IMR-90 (cell line): ENCODE measurements at regions of chr12 and their contacts with region 1.

Region 1: GRCh38 chr12:57583008-57583831 is 7.8 kb upstream of the PIP4K2C start:
- DNase-seq: peak; percentile 81
- ATAC-seq: peak; percentile 100
- H3K4me3 ChIP-seq: no peak overlapping the region
- H3K27ac ChIP-seq: no peak overlapping the region
- H3K4me1 ChIP-seq: no peaks in the 10 kb centered on the region
- H3K27me3 ChIP-seq: peaks cover 36% of the 10 kb centered on the region
- CTCF ChIP-seq: peak; percentile 99
- POLR2A ChIP-seq: no peak
- RAD21 ChIP-seq: peak; percentile 91

Region 2: GRCh38 chr12:56751712-56752598 is 831.3 kb before region 1 on chr12 and contains the start of gene PRIM1:
- CTCF ChIA-PET with region 1: no interaction called
- POLR2A ChIA-PET with region 1: no interaction called
- dilution Hi-C with region 1: no loop called
- in situ Hi-C with region 1: no loop called
- intact Hi-C with region 1: no loop called
- DNase-seq: peak; percentile 66
- ATAC-seq: peak; percentile 95
- H3K4me3 ChIP-seq: peak within 1 kb of the TSS; percentile 82
- H3K27ac ChIP-seq: peak within 1 kb of the TSS; percentile 68
- H3K4me1 ChIP-seq: no peaks in the 10 kb centered on the region
- H3K27me3 ChIP-seq: no peaks in the 10 kb centered on the region
- CTCF ChIP-seq: no peak
- POLR2A ChIP-seq: no peak
- RAD21 ChIP-seq: no peak
- total RNA-seq, gene PRIM1: 12.0 and 15.3 TPM in 2 replicates

Region 3: GRCh38 chr12:57621497-57622292 is 38.5 kb after region 1 on chr12:
- CTCF ChIA-PET with region 1: interaction called, 5 read pairs
- POLR2A ChIA-PET with region 1: no interaction called
- dilution Hi-C with region 1: no loop called
- in situ Hi-C with region 1: loop called (anchors 5 kb)
- intact Hi-C with region 1: loop called (anchors 1 kb)
- DNase-seq: peak; percentile 11
- ATAC-seq: peak; percentile 88
- H3K4me3 ChIP-seq: peak overlapping the region; percentile 34
- H3K27ac ChIP-seq: no peak overlapping the region
- H3K4me1 ChIP-seq: no peaks in the 10 kb centered on the region
- H3K27me3 ChIP-seq: peaks cover 56% of the 10 kb centered on the region
- CTCF ChIP-seq: peak; percentile 80
- POLR2A ChIP-seq: no peak
- RAD21 ChIP-seq: peak; percentile 63

Region 4: GRCh38 chr12:57632694-57633477 is 49.7 kb after region 1 on chr12 and contains the start of gene B4GALNT1:
- CTCF ChIA-PET with region 1: interaction called, 11 read pairs
- POLR2A ChIA-PET with region 1: no interaction called
- dilution Hi-C with region 1: no loop called
- in situ Hi-C with region 1: no loop called
- intact Hi-C with region 1: loop called (anchors 1 kb)
- DNase-seq: peak; percentile 45
- ATAC-seq: peak; percentile 97
- H3K4me3 ChIP-seq: peak within 1 kb of the TSS; percentile 43
- H3K27ac ChIP-seq: no peak within 1 kb of the TSS
- H3K4me1 ChIP-seq: peaks cover 2% of the 10 kb centered on the region; the same call in 1 of the 2 replicates
- H3K27me3 ChIP-seq: peaks cover 41% of the 10 kb centered on the region
- CTCF ChIP-seq: peak; percentile 81
- POLR2A ChIP-seq: no peak
- RAD21 ChIP-seq: peak; percentile 64
- total RNA-seq, gene B4GALNT1: 0.18 and 0.28 TPM in 2 replicates

Region 5: DNA sequence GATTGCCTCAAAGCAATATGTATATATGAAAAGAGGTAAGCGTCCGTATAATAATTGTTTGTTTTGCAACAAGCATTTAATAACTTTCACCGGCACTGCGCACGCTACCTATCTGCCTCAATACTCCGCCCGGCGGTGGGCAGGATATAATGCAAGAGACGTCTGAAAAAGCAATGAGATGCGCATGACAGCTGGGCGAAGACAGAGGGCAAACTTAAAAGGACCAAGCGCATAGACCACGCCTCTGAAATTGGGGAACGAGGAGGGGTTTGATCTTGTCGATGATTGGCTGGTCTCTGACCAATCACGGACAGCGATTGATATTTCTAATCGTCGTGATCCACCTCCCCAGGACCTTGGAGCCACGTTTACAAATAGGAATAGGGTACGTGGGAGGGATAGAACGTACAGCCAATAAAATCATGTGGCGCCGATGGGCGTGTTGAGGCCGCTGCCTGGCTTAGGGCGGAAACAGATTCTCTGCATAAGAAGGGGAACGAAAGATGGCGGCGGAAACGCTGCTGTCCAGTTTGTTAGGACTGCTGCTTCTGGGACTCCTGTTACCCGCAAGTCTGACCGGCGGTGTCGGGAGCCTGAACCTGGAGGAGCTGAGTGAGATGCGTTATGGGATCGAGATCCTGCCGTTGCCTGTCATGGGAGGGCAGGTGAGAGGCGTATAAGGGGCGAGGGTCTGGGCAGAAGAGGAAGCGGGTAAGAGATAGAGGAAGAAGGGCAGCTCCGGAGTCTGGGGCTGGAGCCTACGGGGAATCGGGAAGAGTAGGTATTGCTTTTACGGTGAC is 110.6 kb after region 1 on chr12 and contains the start of gene OS9:
- CTCF ChIA-PET with region 1: interaction called, 3 read pairs
- POLR2A ChIA-PET with region 1: no interaction called
- dilution Hi-C with region 1: no loop called
- in situ Hi-C with region 1: no loop called
- intact Hi-C with region 1: loop called (anchors 2 kb)
- DNase-seq: peak; percentile 100
- ATAC-seq: peak; percentile 97
- H3K4me3 ChIP-seq: peak within 1 kb of the TSS; percentile 73
- H3K27ac ChIP-seq: peak within 1 kb of the TSS; percentile 75
- H3K4me1 ChIP-seq: 0 out of 2 replicates have a peak, but pooled peaks cover 3% of the 10 kb centered on the region
- H3K27me3 ChIP-seq: no peaks in the 10 kb centered on the region
- CTCF ChIP-seq: peak; percentile 90
- POLR2A ChIP-seq: peak; percentile 88
- RAD21 ChIP-seq: peak; percentile 59
- total RNA-seq, gene OS9: 159 and 182 TPM in 2 replicates

Region 6: DNA sequence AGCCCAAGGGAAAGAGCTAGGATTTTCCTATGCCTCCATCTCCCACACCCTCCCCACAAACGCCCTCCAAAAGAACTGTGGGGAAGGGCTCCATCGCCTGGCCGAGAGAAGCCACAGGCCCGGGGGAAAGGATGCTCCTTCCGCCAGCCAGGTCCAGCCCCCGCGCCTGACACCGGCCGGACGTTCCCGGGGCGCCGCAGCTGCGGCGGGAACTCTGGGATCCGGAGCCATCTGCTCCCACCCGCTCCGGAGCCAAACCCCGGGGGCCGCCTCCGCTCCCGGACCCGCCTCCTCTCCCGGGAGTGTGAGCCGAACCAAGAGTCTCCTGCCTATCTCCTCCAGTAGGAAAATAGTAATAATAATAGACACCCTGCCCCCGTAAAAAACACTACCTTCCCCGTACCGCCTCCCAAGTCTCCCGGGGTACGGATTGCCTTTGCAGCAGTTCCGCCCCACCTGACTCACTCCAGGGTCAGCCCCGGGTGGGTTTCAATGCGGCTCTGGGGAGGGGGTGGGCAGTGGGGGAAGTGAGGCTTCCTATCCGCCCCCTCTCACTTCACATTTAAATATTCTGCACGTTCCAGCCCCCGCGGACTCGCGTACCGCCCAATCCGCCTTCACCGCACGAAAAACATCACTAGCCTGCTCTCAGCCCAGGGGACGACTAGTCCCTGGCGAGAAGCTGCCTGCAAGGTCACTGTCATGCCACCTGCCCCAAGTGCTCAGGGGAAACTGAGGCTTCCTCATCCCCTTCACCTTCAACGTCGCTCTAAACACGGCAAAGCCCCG is 152.9 kb after region 1 on chr12:
- CTCF ChIA-PET with region 1: interaction called, 3 read pairs
- POLR2A ChIA-PET with region 1: no interaction called
- dilution Hi-C with region 1: no loop called
- in situ Hi-C with region 1: loop called (anchors 10 kb)
- intact Hi-C with region 1: loop called (anchors 5 kb)
- DNase-seq: peak; percentile 37
- ATAC-seq: peak; percentile 57
- H3K4me3 ChIP-seq: no peak overlapping the region
- H3K27ac ChIP-seq: no peak overlapping the region
- H3K4me1 ChIP-seq: 0 out of 2 replicates have a peak, but pooled peaks cover 3% of the 10 kb centered on the region
- H3K27me3 ChIP-seq: peaks cover 92% of the 10 kb centered on the region
- CTCF ChIP-seq: peak; percentile 50
- POLR2A ChIP-seq: no peak
- RAD21 ChIP-seq: peak; percentile 54